Head of caudate nucleus (tissue), 42 donors: ENCODE measurements at regions of chr11 and their contacts with region 1.

Region 1: GRCh38 chr11:77994412-77995362 is at the start of gene INTS4:
- DNase-seq: peak; percentile 95 to 100 (median 100)

Region 2: GRCh38 chr11:77820563-77821348 is 173.9 kb before region 1 on chr11 and contains the starts of genes AAMDC and RSF1:
- intact Hi-C with region 1: loop called (anchors 2 kb)
- DNase-seq: peak; percentile 98 to 100 (median 99)

Region 3: DNA sequence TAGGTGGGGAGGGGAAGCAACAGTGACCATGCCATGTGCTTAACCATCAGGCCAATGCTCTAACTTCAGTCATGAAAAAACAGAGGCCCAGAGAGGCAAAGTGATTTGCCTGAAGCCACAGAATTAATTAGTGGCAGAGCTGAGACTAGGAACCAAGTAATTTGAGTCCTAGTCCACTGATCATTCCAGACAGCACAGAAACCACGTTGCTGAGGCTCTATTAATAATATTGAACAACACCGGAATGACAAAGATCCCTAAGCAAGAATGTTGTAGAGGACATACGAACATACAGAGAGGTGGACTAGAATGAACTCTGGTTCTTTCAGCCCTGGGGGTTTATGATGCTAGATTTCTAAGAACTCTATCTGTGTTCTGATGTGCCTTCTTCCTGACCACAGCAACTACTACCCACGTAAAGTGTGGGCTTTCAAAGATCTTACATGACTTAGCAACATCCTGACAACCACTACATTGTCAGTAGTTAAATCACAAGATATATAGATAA is 330.6 kb after region 1 on chr11:
- intact Hi-C with region 1: no loop called
- DNase-seq: no peak